HCT116 (cell line): ENCODE measurements at regions of chr22 and their contacts with region 1.

Region 1: GRCh38 chr22:18077639-18078328 is at the start of gene PEX26:
- DNase-seq: peak; percentile 87
- ATAC-seq: peak; percentile 96
- H3K4me3 ChIP-seq: peak within 1 kb of the TSS; percentile 87 to 97
- H3K27ac ChIP-seq: peak within 1 kb of the TSS; percentile 76
- H3K4me1 ChIP-seq: peaks cover 14 to 23% of the 10 kb centered on the region in 2 experiments
- H3K27me3 ChIP-seq: no peaks in the 10 kb centered on the region
- CTCF ChIP-seq: no peak
- POLR2A ChIP-seq: no peak
- RAD21 ChIP-seq: no peak
- total RNA-seq, gene PEX26: 26.4 TPM

Region 2: DNA sequence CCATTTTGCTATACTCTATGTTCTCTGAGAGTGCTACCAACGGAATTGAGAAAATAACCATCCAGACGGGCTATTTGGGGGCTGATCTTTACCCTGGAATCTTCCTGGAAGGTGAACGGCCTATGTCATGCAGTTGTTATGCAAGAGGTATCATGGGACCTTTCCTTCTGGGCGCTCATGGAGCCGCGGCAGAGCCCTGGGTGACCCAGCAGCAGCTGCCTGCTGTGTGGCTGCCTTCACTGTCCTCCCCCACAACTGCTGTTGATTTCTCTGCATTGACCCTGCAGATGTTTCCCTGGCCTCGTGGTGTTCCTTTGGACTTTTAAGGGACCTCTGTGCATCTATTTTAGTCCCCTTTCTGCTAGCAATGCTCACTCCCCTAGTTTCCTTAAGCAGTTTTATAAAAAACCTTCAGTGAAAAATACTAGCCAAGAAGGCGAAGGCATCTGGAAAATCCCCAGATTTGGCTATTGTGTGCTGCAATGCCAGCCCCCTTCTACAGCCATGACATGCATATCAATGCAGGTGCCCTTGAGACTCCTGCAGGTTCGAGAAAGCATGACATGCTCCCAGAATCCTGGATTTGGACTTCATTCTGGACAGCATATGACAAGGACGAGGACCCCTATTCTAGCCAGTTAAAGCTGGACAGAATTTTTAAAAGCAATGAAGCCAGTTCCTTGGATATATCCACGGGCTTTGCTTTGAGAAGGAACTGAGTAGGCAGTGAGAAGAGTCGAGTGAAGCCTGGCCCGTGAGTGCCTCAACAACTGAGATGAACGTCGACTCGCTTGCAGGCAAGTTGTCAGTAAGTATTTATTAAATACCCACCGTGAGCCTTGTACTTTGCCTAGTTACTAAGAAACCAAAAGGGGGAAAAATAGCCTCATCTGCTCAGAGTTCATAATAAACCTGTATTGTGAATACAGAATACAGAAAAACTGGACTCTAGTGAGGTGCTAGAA is 514.6 kb before region 1 on chr22 and contains the start of gene SLC25A18:
- CTCF ChIA-PET with region 1: interaction called, 8 read pairs
- POLR2A ChIA-PET with region 1: no interaction called
- RAD21 ChIA-PET with region 1: interaction called in 1 of 2 experiments, 5 read pairs
- intact Hi-C with region 1: loop called (anchors 2 kb)
- DNase-seq: no peak
- ATAC-seq: no peak
- H3K4me3 ChIP-seq: no peak within 1 kb of the TSS
- H3K27ac ChIP-seq: no peak within 1 kb of the TSS
- H3K4me1 ChIP-seq: no peaks in the 10 kb centered on the region
- H3K27me3 ChIP-seq: no peaks in the 10 kb centered on the region
- CTCF ChIP-seq: peak in 1 of 3 experiments; percentile 28; a peak in 1 of 6 replicates
- POLR2A ChIP-seq: no peak
- RAD21 ChIP-seq: no peak
- total RNA-seq, gene SLC25A18: not detected

Region 3: DNA sequence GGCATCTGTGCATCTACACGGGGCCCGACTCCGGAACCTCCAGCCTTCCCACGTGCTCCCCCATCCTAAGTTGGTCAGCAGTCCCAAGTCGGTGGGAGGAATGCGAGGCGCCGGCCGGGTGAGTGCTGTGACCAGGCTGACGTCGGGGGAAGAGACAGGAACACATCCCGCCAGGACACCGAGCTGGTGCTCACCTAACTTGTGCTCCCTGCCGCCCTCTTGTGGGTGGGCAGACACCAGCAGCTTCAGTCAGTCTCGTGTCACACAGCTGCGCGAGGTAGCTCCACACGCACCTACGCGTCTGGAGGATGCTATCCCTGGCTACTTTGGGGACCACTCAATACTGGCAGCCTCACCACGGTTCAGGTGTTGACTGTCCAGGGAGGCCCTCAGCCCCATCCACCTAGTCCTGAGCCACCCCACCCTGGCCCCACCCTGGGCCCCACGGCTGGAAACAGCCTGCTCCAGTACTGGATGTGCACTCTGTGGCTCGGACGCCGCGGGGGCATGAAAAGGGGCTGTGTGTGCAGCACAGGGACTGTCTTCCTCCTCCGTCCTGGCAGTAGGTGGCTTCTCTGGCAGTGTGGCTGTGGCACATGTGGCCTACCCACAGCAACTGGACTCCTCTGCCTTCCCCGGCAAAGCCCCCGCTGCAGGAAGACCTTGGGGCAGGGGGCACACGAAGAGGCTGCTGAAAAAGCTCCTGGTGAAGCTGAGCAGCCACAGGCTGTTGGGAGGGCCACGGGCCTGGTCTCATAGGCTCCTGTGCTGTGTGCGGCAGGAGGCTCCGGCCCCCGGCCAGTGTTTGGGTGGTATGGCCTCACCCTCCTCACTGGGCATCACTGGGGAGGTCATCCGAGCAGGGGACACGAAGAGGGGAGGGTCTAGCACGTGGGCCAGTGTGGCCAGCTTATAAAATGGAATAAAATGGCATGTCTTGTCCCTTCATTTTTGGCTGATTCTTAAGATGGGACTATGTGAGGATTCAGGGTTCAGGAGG is 292.3 kb before region 1 on chr22:
- CTCF ChIA-PET with region 1: interaction called, 44 read pairs
- POLR2A ChIA-PET with region 1: no interaction called
- RAD21 ChIA-PET with region 1: interaction called, 3 to 7 read pairs
- intact Hi-C with region 1: no loop called
- DNase-seq: peak; percentile 41
- ATAC-seq: peak; percentile 96
- H3K4me3 ChIP-seq: no peak overlapping the region
- H3K27ac ChIP-seq: no peak overlapping the region
- H3K4me1 ChIP-seq: peaks cover 10 to 21% of the 10 kb centered on the region in 2 experiments; a peak in 3 of 4 replicates
- H3K27me3 ChIP-seq: no peaks in the 10 kb centered on the region
- CTCF ChIP-seq: peak; percentile 52 to 93 (median 82); a peak in 5 of 6 replicates
- POLR2A ChIP-seq: no peak
- RAD21 ChIP-seq: peak; percentile 64

Region 4: GRCh38 chr22:17878941-17879340 is 198.8 kb before region 1 on chr22:
- CTCF ChIA-PET with region 1: no interaction called
- POLR2A ChIA-PET with region 1: no interaction called
- RAD21 ChIA-PET with region 1: no interaction called
- intact Hi-C with region 1: no loop called
- DNase-seq: no peak
- ATAC-seq: no peak
- H3K4me3 ChIP-seq: no peak overlapping the region
- H3K27ac ChIP-seq: no peak overlapping the region
- H3K4me1 ChIP-seq: no peaks in the 10 kb centered on the region
- H3K27me3 ChIP-seq: no peaks in the 10 kb centered on the region
- CTCF ChIP-seq: no peak
- POLR2A ChIP-seq: no peak
- RAD21 ChIP-seq: no peak

Region 5: DNA sequence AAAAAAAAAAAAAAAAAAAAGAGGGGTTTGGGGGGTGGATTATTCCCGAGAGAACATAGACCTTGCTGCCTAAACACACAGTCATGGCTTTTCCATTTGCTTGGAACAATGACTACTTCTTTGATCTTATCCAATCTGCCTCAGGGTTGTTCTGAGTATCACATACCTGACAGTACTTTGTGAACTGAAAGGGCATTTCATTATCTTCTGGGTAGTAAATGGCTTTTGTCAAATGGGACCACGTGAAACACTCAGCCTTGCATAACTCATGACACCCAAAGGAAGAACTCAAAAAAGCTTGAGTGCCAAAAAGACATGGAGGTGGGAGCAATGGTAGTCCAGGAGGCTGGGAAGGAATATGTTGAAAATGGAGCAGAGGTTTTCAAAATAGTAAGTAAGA is 180.4 kb before region 1 on chr22:
- CTCF ChIA-PET with region 1: interaction called, 4 read pairs
- POLR2A ChIA-PET with region 1: interaction called, 3 read pairs
- RAD21 ChIA-PET with region 1: no interaction called
- intact Hi-C with region 1: loop called (anchors 2 kb)
- DNase-seq: no peak
- ATAC-seq: no peak
- H3K4me3 ChIP-seq: no peak overlapping the region
- H3K27ac ChIP-seq: no peak overlapping the region
- H3K4me1 ChIP-seq: no peaks in the 10 kb centered on the region
- H3K27me3 ChIP-seq: no peaks in the 10 kb centered on the region
- CTCF ChIP-seq: no peak
- POLR2A ChIP-seq: no peak
- RAD21 ChIP-seq: no peak

Region 6: DNA sequence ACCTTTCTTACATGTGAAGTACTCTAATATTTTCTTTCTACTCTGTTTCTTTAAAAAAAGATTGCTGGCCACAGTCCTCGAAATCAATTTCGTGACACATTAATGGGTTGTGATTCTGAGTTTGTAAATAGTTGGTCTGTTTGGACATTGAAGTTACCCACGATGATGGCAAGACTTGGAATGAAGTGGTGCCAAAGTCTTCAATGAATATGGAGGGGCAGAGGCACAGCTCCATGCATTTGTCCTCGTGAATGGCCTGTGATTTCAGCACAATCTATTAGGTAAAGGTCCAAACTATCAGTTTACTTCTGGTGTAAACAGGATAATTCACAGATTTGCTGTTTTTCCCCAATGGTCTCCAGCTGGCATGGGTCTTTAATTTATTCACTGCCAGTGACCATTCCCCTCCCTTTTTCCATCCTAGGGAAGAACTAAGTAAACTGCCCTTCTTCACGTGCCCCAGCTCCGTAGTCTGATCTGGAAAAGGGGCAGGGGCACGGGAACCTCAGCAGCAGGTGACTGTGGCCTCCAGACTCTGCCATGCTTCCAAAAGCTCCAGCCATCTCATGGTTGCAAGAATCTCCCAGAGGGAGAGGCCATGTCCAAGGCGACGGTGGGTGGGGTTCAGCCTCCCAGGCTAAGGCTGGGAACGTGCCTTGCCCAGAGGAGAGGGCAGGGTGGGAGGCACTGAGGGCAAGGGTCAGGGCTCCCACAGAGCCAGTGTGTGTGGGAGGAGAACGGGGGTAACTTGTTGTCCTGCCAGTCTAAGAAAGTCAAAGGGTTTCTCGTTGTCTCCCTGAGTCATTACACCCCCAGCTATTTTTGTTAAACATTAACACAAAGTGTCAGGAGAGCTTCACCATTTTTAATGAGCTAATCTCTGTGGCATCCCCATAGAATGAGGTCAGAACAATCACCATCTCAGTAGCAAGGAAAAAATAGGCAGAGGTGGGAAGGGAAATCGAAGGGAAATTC is 16.9 kb before region 1 on chr22:
- CTCF ChIA-PET with region 1: interaction called, 15 read pairs
- POLR2A ChIA-PET with region 1: interaction called, 4 read pairs
- RAD21 ChIA-PET with region 1: interaction called in 1 of 2 experiments, 3 read pairs
- intact Hi-C with region 1: no loop called
- DNase-seq: no peak
- ATAC-seq: peak; percentile 47; the same call in 1 of the 2 replicates
- H3K4me3 ChIP-seq: peak overlapping the region in 1 of 2 experiments; percentile 18; a peak in 1 of 4 replicates
- H3K27ac ChIP-seq: no peak overlapping the region
- H3K4me1 ChIP-seq: peaks cover 0 to 36% of the 10 kb centered on the region in 2 experiments; a peak in 3 of 4 replicates
- H3K27me3 ChIP-seq: no peaks in the 10 kb centered on the region
- CTCF ChIP-seq: no peak
- POLR2A ChIP-seq: no peak
- RAD21 ChIP-seq: no peak